ENCODE measurements at regions of chr7 and their contacts with region 1.

Region 1: GRCh38 chr7:114922016-114922651 is at the start of gene MDFIC:
- DNase-seq: peak; percentile 10 to 79
- H3K4me3 ChIP-seq: peak within 1 kb of the TSS; percentile 76 to 83
- H3K27ac ChIP-seq: peak within 1 kb of the TSS; percentile 91 to 95
- H3K4me1 ChIP-seq: peaks cover 4 to 13% of the 10 kb centered on the region in 2 donors
- H3K27me3 ChIP-seq: no peaks in the 10 kb centered on the region
- CTCF ChIP-seq: peak in 1 of 3 experiments; percentile 17
- total RNA-seq, gene MDFIC: 13.3 TPM

Region 2: DNA sequence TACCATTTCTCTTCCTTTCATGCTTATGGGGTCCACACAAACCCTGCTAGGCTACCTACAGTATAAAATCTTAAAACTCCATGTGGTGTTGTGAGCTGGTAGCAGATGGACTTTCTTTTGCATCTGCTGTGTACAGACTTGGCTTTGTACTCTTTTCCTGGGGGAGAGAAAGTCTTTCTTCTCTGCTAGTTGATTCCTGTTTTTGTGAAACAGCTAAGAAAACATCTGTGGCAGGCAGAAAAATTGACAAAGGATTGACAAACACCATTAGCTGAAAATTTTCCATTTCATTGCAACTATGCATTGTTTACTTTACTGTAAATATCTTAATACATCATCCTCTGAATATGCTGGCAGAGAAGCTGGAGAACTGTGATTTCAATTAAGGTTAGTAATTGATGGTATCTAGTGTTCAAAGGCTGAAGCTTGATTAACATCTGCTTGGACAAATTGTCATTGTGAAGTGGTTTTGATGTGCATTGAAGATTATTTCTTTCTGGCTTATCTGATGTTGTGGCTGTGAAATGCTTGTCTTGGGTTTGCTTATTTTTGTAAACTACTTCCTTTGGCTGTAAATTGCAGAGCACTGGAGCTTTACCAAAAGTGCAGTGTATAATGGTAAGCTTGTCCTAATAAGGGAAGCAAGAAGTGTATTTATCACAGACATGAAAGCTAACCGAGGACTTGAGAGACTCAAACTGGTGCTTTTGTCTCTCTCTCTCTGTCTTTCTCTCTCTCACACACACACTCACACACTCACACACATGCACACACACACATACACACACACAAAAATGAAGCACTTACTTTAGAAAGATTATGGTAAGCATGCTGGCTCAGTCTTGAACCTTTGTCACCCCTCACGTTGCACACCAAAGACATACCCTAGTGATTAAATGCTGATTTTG is 507.7 kb before region 1 on chr7 and contains the start of gene FOXP2:
- intact Hi-C with region 1: loop called (anchors 10 kb)
- DNase-seq: no peak
- H3K4me3 ChIP-seq: peak within 1 kb of the TSS; percentile 6 to 66
- H3K27ac ChIP-seq: peak within 1 kb of the TSS; percentile 62 to 68
- H3K4me1 ChIP-seq: peaks cover 0 to 3% of the 10 kb centered on the region in 2 donors
- H3K27me3 ChIP-seq: no peaks in the 10 kb centered on the region
- CTCF ChIP-seq: no peak
- total RNA-seq, gene FOXP2: 11.0 TPM

Region 3: GRCh38 chr7:114789871-114790311 is 132.2 kb before region 1 on chr7:
- intact Hi-C with region 1: loop called (anchors 5 kb)
- DNase-seq: no peak
- H3K4me3 ChIP-seq: no peak overlapping the region
- H3K27ac ChIP-seq: peak overlapping the region in 1 of 2 donors; percentile 41
- H3K4me1 ChIP-seq: peaks cover 0 to 9% of the 10 kb centered on the region in 2 donors
- H3K27me3 ChIP-seq: no peaks in the 10 kb centered on the region
- CTCF ChIP-seq: no peak

Region 4: GRCh38 chr7:114959931-114960330 is 37.8 kb after region 1 on chr7:
- intact Hi-C with region 1: no loop called
- DNase-seq: no peak
- H3K4me3 ChIP-seq: no peak overlapping the region
- H3K27ac ChIP-seq: no peak overlapping the region
- H3K4me1 ChIP-seq: no peaks in the 10 kb centered on the region
- H3K27me3 ChIP-seq: no peaks in the 10 kb centered on the region
- CTCF ChIP-seq: no peak

Region 5: GRCh38 chr7:114979388-114979787 is 57.3 kb after region 1 on chr7:
- intact Hi-C with region 1: no loop called
- DNase-seq: peak in 1 of 2 donors; percentile 67
- H3K4me3 ChIP-seq: no peak overlapping the region
- H3K27ac ChIP-seq: no peak overlapping the region
- H3K4me1 ChIP-seq: peaks cover 0 to 3% of the 10 kb centered on the region in 2 donors
- H3K27me3 ChIP-seq: no peaks in the 10 kb centered on the region
- CTCF ChIP-seq: no peak

Region 6: GRCh38 chr7:115008465-115009114 is 86.5 kb after region 1 on chr7:
- intact Hi-C with region 1: loop called (anchors 5 kb)
- DNase-seq: peak in 1 of 2 donors; percentile 78
- H3K4me3 ChIP-seq: peak overlapping the region in 1 of 2 donors; percentile 19
- H3K27ac ChIP-seq: peak overlapping the region; percentile 52 to 56
- H3K4me1 ChIP-seq: peaks cover 0 to 18% of the 10 kb centered on the region in 2 donors
- H3K27me3 ChIP-seq: no peaks in the 10 kb centered on the region
- CTCF ChIP-seq: no peak

Region 7: GRCh38 chr7:115087437-115087836 is 165.3 kb after region 1 on chr7:
- intact Hi-C with region 1: loop called (anchors 1 kb)
- DNase-seq: no peak
- H3K4me3 ChIP-seq: no peak overlapping the region
- H3K27ac ChIP-seq: no peak overlapping the region
- H3K4me1 ChIP-seq: peaks cover 0 to 10% of the 10 kb centered on the region in 2 donors
- H3K27me3 ChIP-seq: no peaks in the 10 kb centered on the region
- CTCF ChIP-seq: no peak